Naive thymus-derived CD4-positive, alpha-beta T cell (primary cell): ENCODE measurements at regions of chr13 and their contacts with region 1.

Region 1: GRCh38 chr13:26062844-26063444 is 11.1 kb upstream of the SHISA2 start:
- DNase-seq: peak in 7 of 9 donors; percentile 30 to 67 (median 58)
- ATAC-seq: peak; percentile 66
- H3K4me3 ChIP-seq: no peak overlapping the region
- H3K4me3 Mint-ChIP-seq: no peak overlapping the region
- H3K27ac ChIP-seq: no peak overlapping the region
- H3K27ac Mint-ChIP-seq: no peak overlapping the region
- H3K4me1 ChIP-seq: no peaks in the 10 kb centered on the region
- H3K4me1 Mint-ChIP-seq: peaks cover 0 to 16% (median 4%) of the 10 kb centered on the region in 7 donors
- H3K27me3 ChIP-seq: no peaks in the 10 kb centered on the region
- H3K27me3 Mint-ChIP-seq: peaks cover 0 to 7% (median 0%) of the 10 kb centered on the region in 5 donors

Region 2: GRCh38 chr13:25678398-25678797 is 384.5 kb before region 1 on chr13:
- CTCF ChIA-PET with region 1: interaction called, 3 read pairs
- POLR2A ChIA-PET with region 1: no interaction called
- intact Hi-C with region 1: loop called in 1 of 2 experiments (anchors 1 kb)
- DNase-seq: peak in 4 of 9 donors; percentile 3 to 25 (median 5)
- ATAC-seq: no peak
- H3K4me3 ChIP-seq: no peak overlapping the region
- H3K4me3 Mint-ChIP-seq: no peak overlapping the region
- H3K27ac ChIP-seq: no peak overlapping the region
- H3K27ac Mint-ChIP-seq: no peak overlapping the region
- H3K4me1 ChIP-seq: no peaks in the 10 kb centered on the region
- H3K4me1 Mint-ChIP-seq: no peaks in the 10 kb centered on the region
- H3K27me3 ChIP-seq: no peaks in the 10 kb centered on the region
- H3K27me3 Mint-ChIP-seq: peaks cover 0 to 10% (median 6%) of the 10 kb centered on the region in 5 donors

Region 3: GRCh38 chr13:25827831-25828465 is 235.0 kb before region 1 on chr13:
- CTCF ChIA-PET with region 1: interaction called, 15 read pairs
- POLR2A ChIA-PET with region 1: no interaction called
- intact Hi-C with region 1: loop called (anchors 1 kb)
- DNase-seq: no peak
- ATAC-seq: no peak
- H3K4me3 ChIP-seq: no peak overlapping the region
- H3K4me3 Mint-ChIP-seq: no peak overlapping the region
- H3K27ac ChIP-seq: no peak overlapping the region
- H3K27ac Mint-ChIP-seq: no peak overlapping the region
- H3K4me1 ChIP-seq: no peaks in the 10 kb centered on the region
- H3K4me1 Mint-ChIP-seq: peaks cover 0 to 5% (median 0%) of the 10 kb centered on the region in 7 donors
- H3K27me3 ChIP-seq: peaks cover 0 to 4% of the 10 kb centered on the region in 2 donors
- H3K27me3 Mint-ChIP-seq: peaks cover 0 to 4% (median 0%) of the 10 kb centered on the region in 5 donors

Region 4: GRCh38 chr13:25980255-25980654 is 82.7 kb before region 1 on chr13:
- CTCF ChIA-PET with region 1: no interaction called
- POLR2A ChIA-PET with region 1: no interaction called
- intact Hi-C with region 1: loop called in 1 of 2 experiments (anchors 1 kb)
- DNase-seq: no peak
- ATAC-seq: no peak
- H3K4me3 ChIP-seq: no peak overlapping the region
- H3K4me3 Mint-ChIP-seq: no peak overlapping the region
- H3K27ac ChIP-seq: no peak overlapping the region
- H3K27ac Mint-ChIP-seq: peak overlapping the region in 2 of 9 donors; percentile 18 to 24
- H3K4me1 ChIP-seq: peaks cover 0 to 9% of the 10 kb centered on the region in 2 donors
- H3K4me1 Mint-ChIP-seq: peaks cover 15 to 38% (median 24%) of the 10 kb centered on the region in 7 donors
- H3K27me3 ChIP-seq: no peaks in the 10 kb centered on the region
- H3K27me3 Mint-ChIP-seq: peaks cover 0 to 7% (median 0%) of the 10 kb centered on the region in 5 donors